Heart left ventricle (tissue), 16 donors: ENCODE measurements at regions of chr2 and their contacts with region 1.

Region 1: DNA sequence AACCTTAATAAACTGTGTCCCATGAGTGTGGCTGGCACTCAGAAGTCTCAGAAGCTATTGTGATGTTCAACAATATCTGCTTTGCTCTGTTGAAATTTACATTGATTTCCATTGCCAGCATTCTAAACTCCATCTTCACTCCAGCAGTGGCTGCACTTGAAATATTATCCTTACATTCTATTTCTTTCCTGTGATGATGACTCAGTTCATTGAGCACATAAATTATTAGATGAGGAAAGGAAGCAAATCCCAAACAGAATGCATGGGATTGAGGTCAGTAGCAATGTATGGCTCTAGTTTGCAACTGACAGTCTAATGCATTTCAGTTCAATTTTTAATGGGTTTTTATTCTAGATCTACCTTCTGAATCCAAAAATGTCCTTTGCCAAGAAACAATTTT is 92.4 kb upstream of the TTN start:
- DNase-seq: no peak
- ATAC-seq: no peak
- H3K4me3 ChIP-seq: no peak overlapping the region
- H3K27ac ChIP-seq: no peak overlapping the region
- H3K4me1 ChIP-seq: peaks cover 0 to 26% (median 4%) of the 10 kb centered on the region in 12 donors
- H3K27me3 ChIP-seq: no peaks in the 10 kb centered on the region
- CTCF ChIP-seq: no peak
- POLR2A ChIP-seq: no peak

Region 2: GRCh38 chr2:178692845-178693244 is 206.8 kb before region 1 on chr2:
- intact Hi-C with region 1: no loop called
- DNase-seq: no peak
- ATAC-seq: peak in 1 of 4 donors; percentile 29
- H3K4me3 ChIP-seq: no peak overlapping the region
- H3K27ac ChIP-seq: no peak overlapping the region
- H3K4me1 ChIP-seq: peaks cover 0 to 12% (median 0%) of the 10 kb centered on the region in 12 donors
- H3K27me3 ChIP-seq: no peaks in the 10 kb centered on the region
- CTCF ChIP-seq: no peak
- POLR2A ChIP-seq: no peak

Region 3: DNA sequence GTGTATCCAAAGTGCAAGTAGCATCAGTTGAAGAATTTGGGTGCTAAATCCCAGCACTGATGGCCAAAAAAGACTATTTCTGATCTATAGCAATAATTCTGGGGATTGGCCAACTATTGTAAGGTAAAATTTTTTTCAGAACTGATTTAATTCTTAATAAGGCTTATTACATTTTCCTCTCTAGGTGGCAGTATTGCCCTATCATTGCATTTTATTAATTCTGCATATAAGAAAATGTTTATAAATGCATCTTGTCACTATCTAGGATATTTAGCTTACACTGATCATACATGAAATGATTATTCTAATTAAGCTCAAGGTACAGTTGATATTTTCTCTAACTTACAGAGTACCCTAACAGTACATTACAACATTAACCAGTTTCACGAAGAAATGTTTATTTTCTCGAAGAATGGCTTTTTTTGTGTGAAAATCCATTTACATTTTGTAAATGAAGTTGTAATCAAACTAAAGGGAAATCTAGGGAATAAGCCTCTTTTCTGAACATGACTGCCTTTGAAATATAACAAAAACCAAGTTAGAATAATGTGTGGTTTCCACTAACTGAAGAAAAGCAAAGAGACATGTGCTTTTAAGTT is 103.5 kb before region 1 on chr2:
- intact Hi-C with region 1: loop called in 1 of 10 experiments (anchors 5 kb)
- DNase-seq: no peak
- ATAC-seq: no peak
- H3K4me3 ChIP-seq: peak overlapping the region in 1 of 12 donors; percentile 10
- H3K27ac ChIP-seq: no peak overlapping the region
- H3K4me1 ChIP-seq: peaks cover 0 to 50% (median 2%) of the 10 kb centered on the region in 12 donors
- H3K27me3 ChIP-seq: no peaks in the 10 kb centered on the region
- CTCF ChIP-seq: peak; percentile 47 to 80 (median 65)
- POLR2A ChIP-seq: no peak

Region 4: DNA sequence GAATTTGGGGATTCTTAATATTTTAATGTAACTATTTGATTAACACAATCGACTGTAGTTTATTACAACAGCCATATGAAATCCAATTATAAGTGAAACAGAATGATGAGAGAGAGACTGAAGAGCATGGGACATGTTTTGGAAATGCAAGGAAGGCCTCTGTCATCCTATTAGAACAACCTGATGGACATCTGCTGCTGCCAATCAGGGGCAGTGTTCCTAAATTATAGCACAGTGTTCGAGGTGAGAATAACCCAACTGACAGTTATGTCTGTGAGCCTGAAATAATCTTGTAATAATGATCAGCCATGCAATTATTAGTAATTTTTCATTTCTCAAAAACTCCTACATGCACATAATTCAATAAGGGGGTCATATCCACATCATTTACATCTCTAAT is 76.7 kb after region 1 on chr2:
- intact Hi-C with region 1: no loop called
- DNase-seq: no peak
- ATAC-seq: no peak
- H3K4me3 ChIP-seq: no peak overlapping the region
- H3K27ac ChIP-seq: no peak overlapping the region
- H3K4me1 ChIP-seq: no peaks in the 10 kb centered on the region
- H3K27me3 ChIP-seq: no peaks in the 10 kb centered on the region
- CTCF ChIP-seq: no peak
- POLR2A ChIP-seq: no peak

Region 5: DNA sequence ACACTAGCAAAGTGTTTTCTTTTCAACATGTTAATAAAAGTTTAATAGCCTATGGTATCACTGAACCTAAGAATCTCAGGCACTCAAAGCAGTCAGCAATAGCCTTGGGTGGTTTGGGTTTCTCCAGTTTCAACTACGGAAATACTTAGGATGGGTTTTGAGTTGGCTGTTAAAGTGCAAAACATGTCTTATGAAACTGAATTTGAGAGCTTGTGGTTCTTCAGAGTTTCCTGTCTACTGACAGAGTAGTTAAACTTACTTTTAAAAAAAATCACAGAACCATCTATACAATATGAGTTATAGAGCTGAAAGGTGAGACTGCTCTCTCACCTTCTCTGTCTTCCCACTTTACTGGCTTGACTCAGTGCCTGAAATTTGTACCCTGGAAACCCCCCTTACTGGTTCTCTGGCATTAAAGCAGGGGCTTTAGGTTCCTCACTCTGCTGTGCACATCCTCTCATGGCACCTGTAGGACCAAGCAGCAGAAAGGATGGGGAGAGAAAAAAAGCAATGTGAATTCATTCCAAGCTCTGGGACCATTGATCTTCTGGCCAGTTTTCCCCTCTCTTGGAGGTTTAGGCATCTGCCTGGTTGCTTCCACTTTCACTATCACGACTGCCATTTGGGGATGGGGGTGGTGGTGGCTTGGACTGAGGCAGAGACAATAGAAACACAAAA is 132.2 kb after region 1 on chr2:
- intact Hi-C with region 1: no loop called
- DNase-seq: no peak
- ATAC-seq: peak in 2 of 4 donors; percentile 10 to 26
- H3K4me3 ChIP-seq: peak overlapping the region in 5 of 12 donors; percentile 8 to 32 (median 13)
- H3K27ac ChIP-seq: peak overlapping the region in 4 of 12 donors; percentile 8 to 47 (median 32)
- H3K4me1 ChIP-seq: peaks cover 0 to 36% (median 16%) of the 10 kb centered on the region in 12 donors
- H3K27me3 ChIP-seq: no peaks in the 10 kb centered on the region
- CTCF ChIP-seq: no peak
- POLR2A ChIP-seq: no peak